ENCODE measurements at regions of chr12 and their contacts with region 1.

Region 1: DNA sequence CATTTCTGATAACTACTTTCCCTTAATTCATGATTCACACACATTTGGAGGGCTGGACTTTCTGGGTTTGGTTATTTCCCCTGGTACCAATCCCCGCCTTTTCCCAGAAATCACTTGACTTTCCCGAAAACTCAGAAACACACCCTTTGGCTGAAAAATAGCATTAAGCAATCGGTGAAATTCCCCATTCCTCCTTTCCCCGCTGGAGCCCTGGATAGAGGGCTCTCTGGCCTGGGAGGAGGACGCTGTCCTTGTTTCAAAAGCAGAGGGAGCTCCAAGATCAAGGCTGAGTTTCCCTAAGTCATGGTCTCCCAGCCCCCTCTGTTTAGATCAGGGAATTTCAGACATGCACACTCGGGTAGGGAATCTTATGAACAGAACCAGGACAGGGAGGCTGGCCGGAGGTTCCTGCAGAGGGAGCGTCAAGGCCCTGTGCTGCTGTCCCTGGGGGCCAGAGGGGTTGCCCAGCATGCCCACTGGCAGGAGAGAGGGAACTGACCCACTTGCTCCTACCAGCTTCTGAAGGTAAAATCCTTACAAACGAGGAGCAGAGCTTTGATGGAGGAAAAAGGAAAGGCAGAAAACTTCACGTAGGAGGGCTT is at the start of gene C1S:
- DNase-seq: peak; percentile 44
- ATAC-seq: peak; percentile 87
- H3K4me3 ChIP-seq: no peak within 1 kb of the TSS
- H3K27ac ChIP-seq: no peak within 1 kb of the TSS
- H3K4me1 ChIP-seq: 0 out of 2 replicates have a peak, but pooled peaks cover 2% of the 10 kb centered on the region
- H3K27me3 ChIP-seq: peaks cover 8% of the 10 kb centered on the region; the same call in 1 of the 2 replicates
- CTCF ChIP-seq: peak; percentile 48
- total RNA-seq, gene C1S: 2.1 and 2.9 TPM in 2 replicates

Region 2: DNA sequence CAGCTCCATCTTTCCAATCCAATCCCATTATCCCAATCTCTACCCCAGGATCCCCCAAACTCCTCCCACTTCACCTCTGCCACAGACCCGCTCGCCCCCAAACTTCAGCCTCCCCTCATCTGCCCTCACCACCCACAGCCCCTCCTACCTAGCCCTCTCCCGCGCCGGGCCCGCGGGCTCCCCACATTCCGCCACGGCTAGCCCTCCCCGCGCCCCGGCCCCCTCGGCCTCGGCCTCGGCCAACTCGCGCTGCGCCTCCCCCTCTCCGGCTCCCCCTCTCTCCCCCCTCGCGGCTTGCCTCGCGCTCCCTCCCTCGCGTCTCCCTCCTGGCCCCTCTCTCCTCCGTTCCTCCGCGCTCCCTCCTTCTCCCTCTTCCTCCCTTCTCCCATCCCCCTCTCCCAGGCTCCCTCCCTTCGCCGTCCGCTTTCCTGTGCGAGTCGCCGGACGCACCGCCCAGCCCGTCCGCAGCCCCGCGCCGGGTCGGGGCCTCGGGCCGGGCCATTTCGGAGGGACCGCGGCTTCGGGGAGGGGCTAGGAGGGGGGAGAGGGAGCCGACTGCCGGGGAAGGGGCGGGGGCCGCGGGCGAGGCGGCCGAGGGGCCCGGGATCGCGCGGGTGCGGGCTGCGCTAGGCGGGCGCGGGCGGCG is 133.0 kb before region 1 on chr12 and contains the start of gene ATN1:
- CTCF ChIA-PET with region 1: no interaction called
- POLR2A ChIA-PET with region 1: no interaction called
- intact Hi-C with region 1: no loop called
- DNase-seq: peak; percentile 53
- ATAC-seq: peak; percentile 26
- H3K4me3 ChIP-seq: peak within 1 kb of the TSS; percentile 93
- H3K27ac ChIP-seq: no peak within 1 kb of the TSS
- H3K4me1 ChIP-seq: peaks cover 43% of the 10 kb centered on the region
- H3K27me3 ChIP-seq: no peaks in the 10 kb centered on the region
- CTCF ChIP-seq: no peak
- total RNA-seq, gene ATN1: 11.6 and 41.5 TPM in 2 replicates

Region 3: DNA sequence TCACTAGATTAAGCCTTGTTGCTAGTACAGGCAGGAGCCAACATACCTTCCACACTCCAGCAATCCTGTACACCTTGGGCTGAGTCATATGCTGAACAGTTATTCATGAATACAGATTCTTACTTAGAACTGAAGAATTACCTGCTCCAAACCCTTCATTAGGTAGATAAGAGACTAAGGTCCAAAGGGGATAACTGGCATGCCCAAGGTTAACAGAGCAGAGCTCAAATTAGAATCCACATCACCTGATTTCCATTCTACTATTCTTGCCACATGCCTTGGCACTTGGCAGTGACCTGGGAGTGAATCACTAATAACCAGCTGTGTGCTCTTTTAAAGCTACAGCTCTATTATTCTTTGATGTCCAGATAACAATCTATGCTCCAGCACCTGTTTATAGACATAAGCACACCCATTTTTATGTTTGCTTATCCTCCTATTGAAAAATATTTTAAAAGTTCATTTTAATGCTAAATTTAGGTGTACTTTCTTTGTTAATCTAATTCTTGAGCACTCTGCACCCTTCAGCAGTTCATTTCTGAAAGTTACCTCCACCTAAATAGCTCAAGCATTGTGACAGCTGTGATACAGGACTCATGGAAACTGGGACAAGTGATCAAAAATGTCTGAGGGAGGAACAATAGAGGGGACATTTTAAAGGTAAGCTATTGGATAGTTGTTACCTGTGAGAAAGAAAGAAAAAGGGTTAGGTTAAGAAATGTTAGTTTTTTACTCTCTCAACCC is 61.6 kb before region 1 on chr12:
- CTCF ChIA-PET with region 1: no interaction called
- POLR2A ChIA-PET with region 1: no interaction called
- intact Hi-C with region 1: no loop called
- DNase-seq: no peak
- ATAC-seq: peak; percentile 29; the same call in 1 of the 2 replicates
- H3K4me3 ChIP-seq: no peak overlapping the region
- H3K27ac ChIP-seq: no peak overlapping the region
- H3K4me1 ChIP-seq: no peaks in the 10 kb centered on the region
- H3K27me3 ChIP-seq: no peaks in the 10 kb centered on the region
- CTCF ChIP-seq: no peak

Region 4: GRCh38 chr12:7092229-7092985 is 32.0 kb after region 1 on chr12 and contains the start of gene C1R:
- CTCF ChIA-PET with region 1: no interaction called
- POLR2A ChIA-PET with region 1: no interaction called
- intact Hi-C with region 1: loop called (anchors 1 kb)
- DNase-seq: peak; percentile 63
- ATAC-seq: peak; percentile 72
- H3K4me3 ChIP-seq: peak within 1 kb of the TSS; percentile 66
- H3K27ac ChIP-seq: no peak within 1 kb of the TSS
- H3K4me1 ChIP-seq: peaks cover 3% of the 10 kb centered on the region; the same call in 1 of the 2 replicates
- H3K27me3 ChIP-seq: no peaks in the 10 kb centered on the region
- CTCF ChIP-seq: peak; percentile 82
- total RNA-seq, gene C1R: 4.4 and 9.6 TPM in 2 replicates

Region 5: GRCh38 chr12:7108796-7109571 is 48.5 kb after region 1 on chr12 and contains the start of gene C1RL:
- CTCF ChIA-PET with region 1: interaction called, 3 read pairs
- POLR2A ChIA-PET with region 1: no interaction called
- intact Hi-C with region 1: loop called (anchors 2 kb)
- DNase-seq: peak; percentile 81
- ATAC-seq: peak; percentile 68
- H3K4me3 ChIP-seq: peak within 1 kb of the TSS; percentile 92
- H3K27ac ChIP-seq: peak within 1 kb of the TSS; percentile 58
- H3K4me1 ChIP-seq: no peaks in the 10 kb centered on the region; the same call in 1 of the 2 replicates
- H3K27me3 ChIP-seq: no peaks in the 10 kb centered on the region
- CTCF ChIP-seq: peak; percentile 83
- total RNA-seq, gene C1RL: 8.2 and 8.9 TPM in 2 replicates